ENCODE measurements at regions of chr4 and their contacts with region 1.

Region 1: DNA sequence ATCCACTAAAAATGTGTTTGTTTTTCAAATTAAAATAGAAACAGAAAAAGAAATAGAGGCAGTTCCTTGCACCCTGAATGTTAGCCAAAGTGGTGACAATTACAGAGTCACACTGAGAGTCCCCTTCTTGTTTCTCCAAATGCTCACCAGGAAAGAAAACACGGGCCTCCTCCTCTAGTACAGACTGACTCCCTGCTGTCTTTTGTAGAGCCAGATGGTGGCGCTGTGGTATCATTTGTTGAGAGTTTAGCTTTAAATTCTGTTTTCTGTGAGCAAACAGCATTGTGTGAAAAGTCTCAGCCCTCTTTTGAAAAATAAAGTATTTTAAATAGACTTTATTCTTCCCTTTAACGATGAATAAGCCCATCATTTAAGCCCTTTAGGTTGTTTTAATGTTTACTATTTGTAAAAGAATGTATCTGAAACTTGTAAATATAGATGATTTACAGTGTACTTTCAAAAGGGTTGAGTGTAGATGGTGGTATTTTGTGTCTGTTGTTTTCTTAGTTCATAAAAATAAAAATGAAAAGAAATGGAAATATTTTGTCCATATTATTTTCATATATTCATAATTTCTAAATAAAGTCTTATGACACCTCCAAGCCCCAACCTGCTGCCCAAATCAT is 36.9 kb upstream of the ATOH1 start:
- DNase-seq: peak; percentile 26
- H3K4me3 ChIP-seq: no peak overlapping the region
- H3K27ac ChIP-seq: no peak overlapping the region
- H3K4me1 ChIP-seq: no peaks in the 10 kb centered on the region
- H3K27me3 ChIP-seq: no peaks in the 10 kb centered on the region
- CTCF ChIP-seq: peak; percentile 89 to 90

Region 2: DNA sequence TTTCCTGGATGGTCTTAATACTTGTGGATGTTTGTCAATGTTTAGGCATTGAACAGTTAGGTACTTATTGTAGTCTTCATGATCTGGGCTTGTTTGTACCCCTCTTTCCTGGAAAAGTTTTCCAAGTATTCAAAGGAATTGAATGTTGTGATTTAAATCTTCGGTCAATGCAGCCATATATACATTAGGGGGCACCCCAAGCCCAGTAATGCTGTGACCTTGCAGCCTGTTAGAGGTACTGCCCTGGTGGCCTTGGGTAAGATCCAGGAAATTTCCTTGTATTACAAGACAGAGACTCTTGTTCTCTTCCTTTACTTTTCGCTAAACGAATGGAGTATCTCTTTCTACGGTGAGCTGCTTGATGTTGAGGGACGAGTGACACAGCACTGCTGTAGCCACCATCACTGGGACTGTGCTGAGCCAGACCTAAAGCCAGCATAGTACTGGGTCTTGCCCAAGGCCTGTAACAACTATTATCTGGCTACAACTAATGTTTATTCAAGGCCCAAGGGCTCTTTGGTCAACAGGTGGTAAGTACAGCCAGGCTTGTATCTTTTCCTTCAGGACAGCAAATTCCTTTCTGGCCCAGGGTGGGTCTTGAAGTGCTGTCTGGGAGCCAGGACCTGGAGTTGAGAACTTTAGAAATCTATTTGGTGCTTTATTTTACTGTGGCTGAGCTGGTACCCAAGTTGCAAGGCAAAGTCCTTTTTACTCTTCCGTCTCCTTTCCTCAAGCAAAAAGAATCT is 81.4 kb before region 1 on chr4:
- CTCF ChIA-PET with region 1: no interaction called
- dilution Hi-C with region 1: no loop called
- in situ Hi-C with region 1: no loop called
- intact Hi-C with region 1: loop called (anchors 2 kb)
- DNase-seq: peak; percentile 5
- H3K4me3 ChIP-seq: no peak overlapping the region
- H3K27ac ChIP-seq: no peak overlapping the region
- H3K4me1 ChIP-seq: no peaks in the 10 kb centered on the region
- H3K27me3 ChIP-seq: no peaks in the 10 kb centered on the region
- CTCF ChIP-seq: peak; percentile 35 to 52

Region 3: GRCh38 chr4:94127707-94128328 is 336.1 kb after region 1 on chr4:
- CTCF ChIA-PET with region 1: no interaction called
- dilution Hi-C with region 1: no loop called
- in situ Hi-C with region 1: loop called (anchors 10 kb)
- intact Hi-C with region 1: loop called (anchors 1 kb)
- DNase-seq: peak; percentile 19
- H3K4me3 ChIP-seq: no peak overlapping the region
- H3K27ac ChIP-seq: no peak overlapping the region
- H3K4me1 ChIP-seq: no peaks in the 10 kb centered on the region
- H3K27me3 ChIP-seq: no peaks in the 10 kb centered on the region
- CTCF ChIP-seq: peak; percentile 53 to 63

Region 4: GRCh38 chr4:94171616-94172015 is 379.9 kb after region 1 on chr4:
- CTCF ChIA-PET with region 1: no interaction called
- dilution Hi-C with region 1: no loop called
- in situ Hi-C with region 1: no loop called
- intact Hi-C with region 1: no loop called
- DNase-seq: no peak
- H3K4me3 ChIP-seq: no peak overlapping the region
- H3K27ac ChIP-seq: no peak overlapping the region
- H3K4me1 ChIP-seq: no peaks in the 10 kb centered on the region
- H3K27me3 ChIP-seq: no peaks in the 10 kb centered on the region
- CTCF ChIP-seq: peak; percentile 43 to 59

Region 5: GRCh38 chr4:94256828-94257227 is 465.1 kb after region 1 on chr4:
- CTCF ChIA-PET with region 1: no interaction called
- dilution Hi-C with region 1: no loop called
- in situ Hi-C with region 1: no loop called
- intact Hi-C with region 1: loop called (anchors 2 kb)
- DNase-seq: no peak
- H3K4me3 ChIP-seq: no peak overlapping the region
- H3K27ac ChIP-seq: no peak overlapping the region
- H3K4me1 ChIP-seq: peaks cover 2% of the 10 kb centered on the region
- H3K27me3 ChIP-seq: no peaks in the 10 kb centered on the region
- CTCF ChIP-seq: peak; percentile 6 to 44

Measured in mammary epithelial cell (primary cell).